Motor neuron (in vitro differentiated cells): ENCODE measurements at regions of chr9 and their contacts with region 1.

Region 1: DNA sequence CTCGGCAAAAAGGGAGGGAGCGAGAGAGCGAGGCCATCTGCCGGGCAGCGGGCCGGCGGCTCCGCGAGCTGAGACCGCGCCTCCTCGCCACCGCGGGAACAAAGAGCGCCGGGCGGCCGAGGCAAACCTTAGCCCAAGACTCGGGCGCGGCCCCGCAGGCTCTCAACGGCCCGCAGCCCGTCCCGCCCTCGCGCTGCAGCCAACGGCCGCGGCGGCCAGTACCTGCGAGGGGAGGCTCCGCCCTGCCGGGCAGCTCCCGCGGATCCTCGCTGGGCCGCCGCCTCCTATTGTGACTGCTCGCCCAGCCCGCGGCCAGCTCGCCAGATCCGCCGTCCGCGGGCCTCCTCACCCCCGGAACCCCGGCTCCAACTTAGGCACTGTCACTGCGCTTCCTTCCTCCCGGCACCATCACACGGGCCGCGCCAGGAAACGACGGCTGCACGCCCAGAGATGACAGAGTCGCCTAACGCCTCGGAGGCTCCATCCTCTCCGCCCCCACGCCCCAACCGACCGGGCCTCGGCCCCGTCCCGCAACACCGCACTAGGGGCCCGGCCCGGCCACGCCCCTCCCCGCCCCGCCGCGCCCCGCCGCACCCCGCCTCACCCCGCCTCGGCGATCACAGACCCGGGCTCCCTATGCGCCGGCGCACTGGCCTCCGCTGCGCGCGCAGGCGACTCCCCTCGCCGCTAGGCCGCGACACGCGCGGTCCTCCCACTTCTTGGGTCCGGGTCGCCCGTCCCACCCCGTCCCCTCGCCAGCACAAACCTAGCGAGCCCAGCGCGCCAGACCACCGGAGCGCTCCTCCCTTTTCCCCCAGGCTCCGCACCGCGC is 479 bp upstream of the RNF38 start:
- ATAC-seq: peak; percentile 76 to 86 (median 84)
- H3K4me3 ChIP-seq: peak overlapping the region; percentile 64 to 92 (median 85)
- H3K27ac ChIP-seq: peak overlapping the region; percentile 96 to 98
- H3K4me1 ChIP-seq: peaks cover 8 to 14% of the 10 kb centered on the region in 2 donors

Region 2: GRCh38 chr9:36543916-36544315 is 143.4 kb after region 1 on chr9:
- in situ Hi-C with region 1: loop called in 1 of 9 experiments (anchors 25 kb)
- ATAC-seq: peak in 4 of 8 experiments; percentile 54 to 97 (median 76)
- H3K4me3 ChIP-seq: no peak overlapping the region
- H3K27ac ChIP-seq: no peak overlapping the region
- H3K4me1 ChIP-seq: no peaks in the 10 kb centered on the region

Region 3: GRCh38 chr9:36551129-36551528 is 150.6 kb after region 1 on chr9:
- in situ Hi-C with region 1: loop called in 7 of 9 experiments (anchors 5 to 25 kb)
- ATAC-seq: no peak
- H3K4me3 ChIP-seq: no peak overlapping the region
- H3K27ac ChIP-seq: no peak overlapping the region
- H3K4me1 ChIP-seq: no peaks in the 10 kb centered on the region

Region 4: GRCh38 chr9:36572515-36573418 is 172.2 kb after region 1 on chr9 and contains the start of gene MELK:
- in situ Hi-C with region 1: loop called in 3 of 9 experiments (anchors 25 kb)
- ATAC-seq: peak; percentile 89 to 96 (median 94)
- H3K4me3 ChIP-seq: peak within 1 kb of the TSS; percentile 72 to 90 (median 81)
- H3K27ac ChIP-seq: peak within 1 kb of the TSS; percentile 9 to 65
- H3K4me1 ChIP-seq: peaks cover 0 to 2% of the 10 kb centered on the region in 2 donors
- total RNA-seq, gene MELK: 0.25 to 23.5 (median 1.6) TPM

Region 5: DNA sequence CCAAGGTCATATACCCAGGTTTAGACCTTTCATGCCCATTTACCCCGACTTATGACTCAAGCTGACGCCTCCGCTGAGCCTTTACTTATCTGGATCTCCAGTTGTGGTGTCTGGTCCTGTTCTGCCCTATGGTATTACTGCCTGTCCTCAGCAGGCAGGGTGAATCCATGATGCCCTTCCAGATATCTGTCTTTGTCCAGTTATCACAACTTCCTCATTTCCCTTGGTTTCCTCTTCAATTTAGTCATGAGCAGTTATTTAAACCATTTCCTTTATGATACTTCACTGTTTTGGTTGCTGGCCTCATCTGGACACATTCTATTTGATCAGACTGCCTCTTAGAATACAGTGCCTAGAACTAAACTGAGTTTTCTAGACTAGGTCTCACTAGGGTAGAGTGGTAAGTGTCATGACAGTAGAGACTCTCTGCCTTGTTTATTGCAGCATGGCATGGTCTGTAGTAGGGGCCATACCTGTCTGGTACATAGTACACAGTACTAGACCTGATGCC is 265.4 kb after region 1 on chr9:
- in situ Hi-C with region 1: no loop called
- ATAC-seq: no peak
- H3K4me3 ChIP-seq: no peak overlapping the region
- H3K27ac ChIP-seq: no peak overlapping the region
- H3K4me1 ChIP-seq: no peaks in the 10 kb centered on the region

Region 6: DNA sequence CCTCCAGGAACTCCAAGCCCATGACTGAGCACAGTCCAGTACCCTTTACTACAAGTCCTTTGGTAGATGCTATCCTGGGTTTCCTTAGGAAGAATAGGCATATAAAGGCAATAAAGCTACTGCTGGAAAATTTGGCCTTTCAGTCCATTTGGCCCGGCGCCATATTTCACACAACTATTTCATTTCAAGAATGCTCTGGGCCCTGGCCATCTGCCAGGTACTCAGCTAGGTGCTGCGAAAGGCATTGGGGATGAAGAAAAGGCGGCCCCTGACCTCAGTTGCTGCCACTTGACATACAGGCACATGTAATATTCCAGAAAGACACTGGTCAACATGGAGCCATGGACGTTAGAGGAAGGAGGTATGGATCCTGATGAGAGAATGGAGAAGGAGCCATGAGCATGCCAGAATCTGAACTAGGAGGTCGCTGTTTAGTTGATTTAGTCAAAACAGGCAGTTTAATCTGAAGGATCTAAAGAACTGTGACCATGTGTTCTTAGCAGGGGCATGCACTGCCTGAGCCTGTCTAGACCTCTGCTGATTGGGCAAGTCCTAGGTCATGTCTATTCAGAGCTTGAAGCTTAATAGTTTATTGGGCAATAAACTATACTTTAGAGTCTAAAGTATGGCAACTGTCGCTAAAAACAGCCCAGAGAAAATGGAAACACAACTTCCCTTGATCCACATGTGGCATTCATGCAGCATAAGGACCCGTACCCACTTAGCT is 321.5 kb after region 1 on chr9:
- in situ Hi-C with region 1: loop called in 2 of 9 experiments (anchors 25 kb)
- ATAC-seq: no peak
- H3K4me3 ChIP-seq: no peak overlapping the region
- H3K27ac ChIP-seq: no peak overlapping the region
- H3K4me1 ChIP-seq: no peaks in the 10 kb centered on the region

Region 7: GRCh38 chr9:36728651-36729520 is 328.3 kb after region 1 on chr9:
- in situ Hi-C with region 1: loop called in 3 of 9 experiments (anchors 10 to 25 kb)
- ATAC-seq: peak; percentile 78 to 96 (median 93)
- H3K4me3 ChIP-seq: no peak overlapping the region
- H3K27ac ChIP-seq: no peak overlapping the region
- H3K4me1 ChIP-seq: peaks cover 0 to 4% of the 10 kb centered on the region in 2 donors

Region 8: DNA sequence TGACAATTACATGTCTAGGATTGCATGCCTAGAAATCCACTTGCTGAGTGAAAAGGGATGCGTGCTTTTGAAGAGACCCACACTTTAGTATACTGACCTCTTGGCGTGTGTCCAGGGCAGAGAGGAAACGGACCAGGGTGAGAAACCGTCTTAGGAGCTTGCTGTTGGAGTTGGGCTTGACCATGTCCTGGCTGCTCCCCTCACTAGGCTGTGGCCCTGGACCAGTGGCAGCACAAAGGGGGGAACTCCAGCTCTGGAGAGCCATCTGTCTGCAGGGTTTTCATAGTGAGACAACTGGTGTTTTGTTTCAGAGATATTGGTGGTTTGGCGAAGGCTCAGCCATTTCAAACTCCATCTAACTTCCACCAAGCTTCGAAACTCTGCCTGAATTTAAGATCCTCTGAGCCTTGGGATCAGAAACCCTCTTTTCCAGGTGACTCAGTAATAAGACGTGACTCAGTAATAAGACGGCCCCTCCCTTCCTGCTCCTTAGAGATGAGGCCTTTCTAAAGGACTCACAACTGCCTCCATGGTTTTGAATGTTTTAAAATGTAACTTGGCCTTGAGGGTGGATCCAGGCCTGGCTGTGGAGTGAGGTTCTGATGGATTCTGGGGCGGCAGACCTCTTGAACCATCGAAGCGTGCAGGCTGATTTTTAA is 337.9 kb after region 1 on chr9:
- in situ Hi-C with region 1: loop called in 2 of 9 experiments (anchors 10 to 25 kb)
- ATAC-seq: peak in 2 of 8 experiments; percentile 93 to 95
- H3K4me3 ChIP-seq: no peak overlapping the region
- H3K27ac ChIP-seq: no peak overlapping the region
- H3K4me1 ChIP-seq: peaks cover 2 to 14% of the 10 kb centered on the region in 2 donors